K562 (cell line): ENCODE measurements at regions of chr6 and their contacts with region 1.

Region 1: GRCh38 chr6:30483677-30484279 is 5.5 kb upstream of the HLA-E start:
- DNase-seq: peak in 3 of 4 experiments; percentile 29 to 83 (median 62)
- ATAC-seq: peak; percentile 56; the same call in 2 of the 3 replicates
- H3K4me3 ChIP-seq: no peak overlapping the region
- H3K27ac ChIP-seq: no peak overlapping the region
- H3K4me1 ChIP-seq: peaks cover 2 to 11% of the 10 kb centered on the region in 2 experiments; a peak in 3 of 5 replicates
- H3K27me3 ChIP-seq: peaks cover 19 to 26% of the 10 kb centered on the region in 2 experiments
- CTCF ChIP-seq: peak; percentile 75 to 90 (median 77)
- EP300 ChIP-seq: no peak
- POLR2A ChIP-seq: no peak
- RAD21 ChIP-seq: peak; percentile 88 to 89

Region 2: GRCh38 chr6:30533460-30534294 is 49.9 kb after region 1 on chr6:
- CTCF ChIA-PET with region 1: interaction called, 7 read pairs
- POLR2A ChIA-PET with region 1: interaction called, 5 read pairs
- in situ Hi-C with region 1: no loop called
- intact Hi-C with region 1: loop called (anchors 1 kb)
- DNase-seq: no peak
- ATAC-seq: no peak
- H3K4me3 ChIP-seq: no peak overlapping the region
- H3K27ac ChIP-seq: no peak overlapping the region
- H3K4me1 ChIP-seq: peaks cover 7 to 14% of the 10 kb centered on the region in 2 experiments; a peak in 4 of 5 replicates
- H3K27me3 ChIP-seq: no peaks in the 10 kb centered on the region
- CTCF ChIP-seq: no peak; a peak in 1 of 6 replicates
- EP300 ChIP-seq: no peak
- POLR2A ChIP-seq: no peak
- RAD21 ChIP-seq: no peak

Region 3: DNA sequence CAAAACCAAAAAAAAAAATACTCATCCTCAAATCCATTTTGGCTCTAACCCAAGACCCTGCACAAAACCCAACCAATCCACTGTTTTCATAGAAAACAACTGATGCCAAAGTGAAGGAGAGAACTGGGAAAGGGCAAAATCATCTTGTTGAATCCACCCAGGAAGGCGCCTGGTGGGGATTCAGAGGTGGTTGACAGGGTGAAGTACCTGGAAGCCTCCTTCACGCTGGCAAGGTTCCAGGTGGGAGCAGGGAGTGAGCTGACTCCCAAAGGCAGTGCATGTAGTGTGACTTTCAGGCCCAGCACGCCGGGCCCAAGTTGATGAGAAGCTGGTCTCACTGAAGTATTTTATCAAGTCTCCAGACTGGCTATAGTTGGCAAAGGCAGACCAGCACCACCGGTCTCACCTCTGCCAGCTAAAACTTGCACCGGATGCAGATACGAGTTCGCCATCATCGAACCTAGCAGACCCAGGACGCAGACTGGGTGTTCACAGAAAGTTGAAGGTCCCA is 116.7 kb after region 1 on chr6:
- CTCF ChIA-PET with region 1: interaction called, 17 read pairs
- POLR2A ChIA-PET with region 1: interaction called, 3 read pairs
- in situ Hi-C with region 1: no loop called
- intact Hi-C with region 1: loop called (anchors 1 kb)
- DNase-seq: peak in 2 of 4 experiments; percentile 29 to 30
- ATAC-seq: no peak
- H3K4me3 ChIP-seq: no peak overlapping the region
- H3K27ac ChIP-seq: no peak overlapping the region
- H3K4me1 ChIP-seq: peaks cover 4 to 11% of the 10 kb centered on the region in 2 experiments; a peak in 4 of 5 replicates
- H3K27me3 ChIP-seq: no peaks in the 10 kb centered on the region
- CTCF ChIP-seq: no peak
- EP300 ChIP-seq: no peak
- POLR2A ChIP-seq: peak; percentile 63
- RAD21 ChIP-seq: no peak

Region 4: DNA sequence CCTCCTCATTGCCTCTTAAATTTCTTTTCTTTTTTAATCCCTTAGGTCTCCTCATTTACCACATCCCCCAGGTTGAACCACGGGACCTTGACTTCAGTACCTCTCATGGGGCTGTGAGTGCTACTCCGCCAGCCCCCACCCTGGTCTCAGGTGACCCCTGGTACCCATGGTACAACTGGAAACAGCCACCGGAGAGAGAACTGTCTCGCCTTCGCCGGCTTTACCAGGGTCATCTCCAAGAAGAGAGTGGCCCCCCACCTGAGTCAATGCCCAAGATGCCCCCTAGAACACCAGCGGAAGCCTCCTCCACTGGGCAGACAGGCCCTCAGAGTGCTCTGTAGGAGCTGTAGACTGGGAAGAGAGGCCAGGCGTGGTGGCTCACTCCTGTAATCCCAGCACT is 141.7 kb after region 1 on chr6:
- CTCF ChIA-PET with region 1: no interaction called
- POLR2A ChIA-PET with region 1: no interaction called
- in situ Hi-C with region 1: no loop called
- intact Hi-C with region 1: no loop called
- DNase-seq: no peak
- ATAC-seq: no peak
- H3K4me3 ChIP-seq: no peak overlapping the region
- H3K27ac ChIP-seq: no peak overlapping the region
- H3K4me1 ChIP-seq: peaks cover 0 to 8% of the 10 kb centered on the region in 2 experiments; a peak in 1 of 5 replicates
- H3K27me3 ChIP-seq: no peaks in the 10 kb centered on the region
- CTCF ChIP-seq: no peak
- EP300 ChIP-seq: no peak
- POLR2A ChIP-seq: no peak
- RAD21 ChIP-seq: no peak

Region 5: GRCh38 chr6:30717042-30717844 is 233.5 kb after region 1 on chr6 and contains the start of gene MDC1:
- CTCF ChIA-PET with region 1: interaction called, 16 read pairs
- POLR2A ChIA-PET with region 1: interaction called, 4 read pairs
- in situ Hi-C with region 1: loop called (anchors 5 kb)
- intact Hi-C with region 1: no loop called
- DNase-seq: peak; percentile 96 to 100 (median 98)
- ATAC-seq: peak; percentile 78
- H3K4me3 ChIP-seq: peak within 1 kb of the TSS; percentile 56
- H3K27ac ChIP-seq: peak within 1 kb of the TSS; percentile 98
- H3K4me1 ChIP-seq: peaks cover 7 to 15% of the 10 kb centered on the region in 2 experiments
- H3K27me3 ChIP-seq: no peaks in the 10 kb centered on the region
- CTCF ChIP-seq: peak in 2 of 3 experiments; percentile 38 to 52; a peak in 3 of 6 replicates
- EP300 ChIP-seq: peak; percentile 84
- POLR2A ChIP-seq: peak; percentile 91
- RAD21 ChIP-seq: peak; percentile 24 to 32; a peak in 3 of 4 replicates
- polyA plus RNA-seq, gene MDC1: 8.2 to 8.8 TPM

Region 6: DNA sequence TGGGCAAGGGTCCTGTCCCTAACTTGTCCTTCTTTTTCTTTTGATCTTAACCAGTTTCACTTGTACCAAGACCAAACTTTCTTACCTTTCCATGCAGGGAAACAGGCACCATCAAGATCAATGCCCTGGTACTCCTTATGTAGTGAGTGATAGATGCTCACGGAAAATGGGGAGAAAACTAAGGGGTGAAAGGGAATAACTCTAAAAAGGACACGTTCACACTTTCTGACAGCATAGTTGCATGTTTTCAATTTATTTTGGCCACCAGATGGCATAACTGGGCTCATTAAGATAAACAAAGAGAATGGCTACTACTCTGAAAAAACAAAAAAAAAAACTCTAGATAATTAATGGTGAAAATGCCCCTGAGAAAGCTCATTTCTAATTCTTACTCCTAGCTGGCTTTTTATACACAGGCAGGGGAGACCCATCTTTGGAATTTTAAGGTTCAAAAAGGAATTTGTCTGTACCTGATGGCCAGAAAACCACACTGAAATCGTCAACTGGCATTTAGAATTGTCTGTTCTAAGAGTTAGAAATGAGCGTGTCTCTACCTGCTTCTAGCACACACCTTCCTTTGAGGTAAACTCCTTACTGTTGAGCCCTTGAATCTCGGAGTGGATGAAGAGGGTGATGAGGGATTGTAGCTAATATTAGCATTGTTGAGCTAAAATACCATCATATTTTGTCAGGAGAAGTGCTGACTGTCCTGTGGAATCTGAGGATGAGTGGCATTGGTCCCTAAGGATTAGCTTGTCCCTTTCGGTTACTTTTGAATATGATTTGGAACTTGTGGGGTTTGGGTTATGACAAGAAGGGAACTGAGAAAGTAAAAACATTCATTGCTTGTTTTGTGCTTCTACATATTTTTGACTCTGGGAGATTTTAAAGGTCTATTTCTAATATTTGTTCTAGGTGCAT is 338.3 kb after region 1 on chr6:
- CTCF ChIA-PET with region 1: no interaction called
- POLR2A ChIA-PET with region 1: no interaction called
- in situ Hi-C with region 1: no loop called
- intact Hi-C with region 1: loop called (anchors 5 kb)
- DNase-seq: peak; percentile 51 to 84 (median 59)
- ATAC-seq: peak; percentile 76
- H3K4me3 ChIP-seq: no peak overlapping the region
- H3K27ac ChIP-seq: peak overlapping the region; percentile 20; the same call in 2 of the 3 replicates
- H3K4me1 ChIP-seq: peaks cover 15 to 36% of the 10 kb centered on the region in 2 experiments
- H3K27me3 ChIP-seq: no peaks in the 10 kb centered on the region
- CTCF ChIP-seq: peak; percentile 51 to 84 (median 70); a peak in 5 of 6 replicates
- EP300 ChIP-seq: 0 out of 2 replicates have a peak, but pooled peaks have one; percentile 13
- POLR2A ChIP-seq: no peak
- RAD21 ChIP-seq: peak; percentile 69 to 72